AG04450 (cell line): ENCODE measurements at regions of chr12 and their contacts with region 1.

Region 1: GRCh38 chr12:12736759-12737676 is 19.9 kb downstream of the CDKN1B start:
- DNase-seq: no peak
- H3K4me3 ChIP-seq: peak overlapping the region; percentile 43
- H3K27ac ChIP-seq: peak overlapping the region; percentile 83
- H3K27me3 ChIP-seq: no peaks in the 10 kb centered on the region
- CTCF ChIP-seq: peak; percentile 62

Region 2: GRCh38 chr12:12376646-12377448 is 360.2 kb before region 1 on chr12:
- CTCF ChIA-PET with region 1: interaction called, 19 read pairs
- POLR2A ChIA-PET with region 1: no interaction called
- DNase-seq: peak; percentile 60
- H3K4me3 ChIP-seq: no peak overlapping the region
- H3K27ac ChIP-seq: no peak overlapping the region
- H3K27me3 ChIP-seq: no peaks in the 10 kb centered on the region
- CTCF ChIP-seq: peak; percentile 65

Region 3: DNA sequence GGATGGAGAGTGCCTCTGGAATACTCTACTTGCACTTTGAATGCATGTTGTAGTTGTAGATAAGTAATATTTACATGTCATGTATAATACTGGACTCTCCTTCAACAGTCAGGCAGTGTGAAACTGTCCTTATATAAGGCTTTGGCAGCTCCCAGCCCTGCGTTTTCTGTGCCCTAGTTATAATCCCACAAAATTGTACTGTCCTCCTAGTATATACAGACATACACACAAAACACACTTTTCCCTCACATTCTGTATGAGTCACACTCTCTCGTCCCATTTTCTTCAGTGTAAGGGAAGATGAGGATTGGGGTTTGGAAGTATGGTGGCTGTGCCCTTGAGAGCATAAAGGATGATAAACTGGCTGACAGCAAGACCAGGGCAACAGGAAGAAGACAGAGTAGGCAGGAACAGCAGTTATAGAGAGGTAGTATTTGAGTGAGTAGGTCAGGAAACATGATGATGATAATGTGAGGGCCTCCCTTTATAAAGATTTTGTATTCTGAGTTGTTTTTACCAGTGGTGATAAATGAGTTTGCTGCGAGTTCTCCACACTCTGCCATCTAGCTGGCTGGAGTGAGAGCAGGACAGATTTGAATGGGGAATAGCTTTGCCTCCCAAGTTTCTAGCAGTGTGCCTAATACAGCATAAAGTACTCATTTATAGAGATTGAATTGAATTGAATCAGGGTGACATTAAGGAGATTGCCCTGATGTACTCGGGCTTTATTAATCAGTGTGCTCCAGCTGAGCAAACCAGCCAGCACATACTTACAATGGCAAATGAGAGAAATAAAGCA is 120.3 kb before region 1 on chr12:
- CTCF ChIA-PET with region 1: no interaction called
- POLR2A ChIA-PET with region 1: no interaction called
- DNase-seq: no peak
- H3K4me3 ChIP-seq: no peak overlapping the region
- H3K27ac ChIP-seq: no peak overlapping the region
- H3K27me3 ChIP-seq: no peaks in the 10 kb centered on the region
- CTCF ChIP-seq: no peak

Region 4: GRCh38 chr12:12684375-12685106 is 52.5 kb before region 1 on chr12:
- CTCF ChIA-PET with region 1: no interaction called
- POLR2A ChIA-PET with region 1: no interaction called
- DNase-seq: no peak
- H3K4me3 ChIP-seq: no peak overlapping the region
- H3K27ac ChIP-seq: no peak overlapping the region
- H3K27me3 ChIP-seq: peaks cover 11% of the 10 kb centered on the region
- CTCF ChIP-seq: no peak

Region 5: DNA sequence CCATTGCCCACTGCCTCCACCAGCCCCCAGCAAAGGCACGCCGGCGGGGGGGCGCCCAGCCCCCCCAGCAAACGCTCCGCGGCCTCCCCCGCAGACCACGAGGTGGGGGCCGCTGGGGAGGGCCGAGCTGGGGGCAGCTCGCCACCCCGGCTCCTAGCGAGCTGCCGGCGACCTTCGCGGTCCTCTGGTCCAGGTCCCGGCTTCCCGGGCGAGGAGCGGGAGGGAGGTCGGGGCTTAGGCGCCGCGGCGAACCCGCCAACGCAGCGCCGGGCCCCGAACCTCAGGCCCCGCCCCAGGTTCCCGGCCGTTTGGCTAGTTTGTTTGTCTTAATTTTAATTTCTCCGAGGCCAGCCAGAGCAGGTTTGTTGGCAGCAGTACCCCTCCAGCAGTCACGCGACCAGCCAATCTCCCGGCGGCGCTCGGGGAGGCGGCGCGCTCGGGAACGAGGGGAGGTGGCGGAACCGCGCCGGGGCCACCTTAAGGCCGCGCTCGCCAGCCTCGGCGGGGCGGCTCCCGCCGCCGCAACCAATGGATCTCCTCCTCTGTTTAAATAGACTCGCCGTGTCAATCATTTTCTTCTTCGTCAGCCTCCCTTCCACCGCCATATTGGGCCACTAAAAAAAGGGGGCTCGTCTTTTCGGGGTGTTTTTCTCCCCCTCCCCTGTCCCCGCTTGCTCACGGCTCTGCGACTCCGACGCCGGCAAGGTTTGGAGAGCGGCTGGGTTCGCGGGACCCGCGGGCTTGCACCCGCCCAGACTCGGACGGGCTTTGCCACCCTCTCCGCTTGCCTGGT is 20.0 kb before region 1 on chr12 and contains the start of gene CDKN1B:
- CTCF ChIA-PET with region 1: interaction called, 18 read pairs
- POLR2A ChIA-PET with region 1: interaction called, 6 read pairs
- DNase-seq: peak; percentile 88
- H3K4me3 ChIP-seq: peak within 1 kb of the TSS; percentile 96
- H3K27ac ChIP-seq: peak within 1 kb of the TSS; percentile 95
- H3K27me3 ChIP-seq: no peaks in the 10 kb centered on the region
- CTCF ChIP-seq: no peak
- polyA plus RNA-seq, gene CDKN1B: 17.9 and 23.1 TPM in 2 replicates

Region 6: GRCh38 chr12:12757121-12757520 is 20.1 kb after region 1 on chr12:
- CTCF ChIA-PET with region 1: interaction called, 12 read pairs
- POLR2A ChIA-PET with region 1: no interaction called
- DNase-seq: no peak
- H3K4me3 ChIP-seq: no peak overlapping the region
- H3K27ac ChIP-seq: no peak overlapping the region
- H3K27me3 ChIP-seq: no peaks in the 10 kb centered on the region
- CTCF ChIP-seq: no peak

Region 7: DNA sequence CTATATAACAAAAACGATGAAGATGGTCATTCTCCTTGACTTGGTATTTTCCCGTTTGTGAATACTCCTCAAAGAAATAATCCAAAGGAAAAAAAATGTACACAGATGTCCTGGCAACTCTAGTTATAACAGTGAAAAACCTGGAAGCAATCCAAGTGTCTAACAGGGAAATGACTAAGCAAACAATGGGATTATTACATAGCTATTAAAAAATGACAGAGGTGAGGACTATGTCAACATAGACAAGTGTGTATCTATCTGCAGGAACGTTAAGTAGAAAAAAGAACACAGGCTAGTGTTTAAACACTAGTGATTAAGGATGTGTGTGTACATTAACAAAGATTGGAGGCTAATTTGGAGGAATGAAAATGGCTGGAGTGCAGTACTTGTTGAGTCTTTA is 42.5 kb after region 1 on chr12:
- CTCF ChIA-PET with region 1: interaction called, 12 read pairs
- POLR2A ChIA-PET with region 1: no interaction called
- DNase-seq: peak; percentile 88
- H3K4me3 ChIP-seq: no peak overlapping the region
- H3K27ac ChIP-seq: no peak overlapping the region
- H3K27me3 ChIP-seq: no peaks in the 10 kb centered on the region
- CTCF ChIP-seq: no peak

Region 8: DNA sequence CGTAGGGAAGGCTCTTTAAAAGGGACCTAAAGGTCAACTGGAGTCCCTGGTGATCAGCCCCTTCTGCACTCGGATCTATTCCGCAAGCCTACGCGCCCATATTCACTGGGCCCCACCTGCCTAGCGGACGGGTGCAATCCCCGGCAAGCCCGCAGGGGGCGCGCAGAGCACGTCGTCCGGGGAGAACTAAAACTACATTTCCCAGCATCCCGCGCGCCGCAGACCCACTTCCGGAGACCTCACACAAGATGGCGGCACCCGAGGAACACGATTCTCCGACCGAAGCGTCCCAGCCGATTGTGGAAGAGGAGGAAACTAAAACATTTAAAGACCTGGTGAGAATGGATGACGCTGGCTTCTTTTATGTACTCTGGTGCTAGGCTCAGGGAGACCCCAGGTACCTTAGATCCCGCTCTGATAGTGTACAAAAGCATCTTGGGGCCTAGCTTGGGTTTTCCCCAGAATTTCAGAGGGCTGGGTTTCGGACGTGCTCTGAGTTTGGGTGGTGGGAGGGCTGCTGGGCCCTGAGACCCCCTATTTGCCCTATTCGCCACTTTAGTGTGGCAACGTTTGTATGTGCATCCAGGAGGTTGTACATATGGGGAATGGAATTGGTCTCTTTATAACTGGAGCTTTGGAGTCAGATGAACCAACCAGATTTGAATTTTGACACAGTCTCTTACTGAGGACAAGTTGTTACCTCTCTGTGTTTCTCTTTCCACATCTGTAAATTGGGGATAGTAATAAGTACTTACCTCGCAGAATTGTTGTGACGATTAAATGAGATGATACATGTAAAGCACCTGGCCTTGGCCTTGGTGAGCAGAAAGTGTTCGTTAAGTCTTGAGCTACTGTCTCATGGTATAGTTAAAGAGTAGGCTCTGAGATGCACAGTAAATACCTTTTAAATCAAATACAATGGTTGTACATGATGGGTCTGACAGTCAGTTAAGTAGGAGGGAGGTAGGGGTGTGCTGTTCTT is 76.4 kb after region 1 on chr12 and contains the start of gene DDX47:
- CTCF ChIA-PET with region 1: interaction called, 15 read pairs
- POLR2A ChIA-PET with region 1: interaction called, 7 read pairs
- DNase-seq: peak; percentile 74
- H3K4me3 ChIP-seq: peak within 1 kb of the TSS; percentile 91
- H3K27ac ChIP-seq: peak within 1 kb of the TSS; percentile 49
- H3K27me3 ChIP-seq: no peaks in the 10 kb centered on the region
- CTCF ChIP-seq: peak; percentile 90
- polyA plus RNA-seq, gene DDX47: 91.3 and 113 TPM in 2 replicates

Region 9: DNA sequence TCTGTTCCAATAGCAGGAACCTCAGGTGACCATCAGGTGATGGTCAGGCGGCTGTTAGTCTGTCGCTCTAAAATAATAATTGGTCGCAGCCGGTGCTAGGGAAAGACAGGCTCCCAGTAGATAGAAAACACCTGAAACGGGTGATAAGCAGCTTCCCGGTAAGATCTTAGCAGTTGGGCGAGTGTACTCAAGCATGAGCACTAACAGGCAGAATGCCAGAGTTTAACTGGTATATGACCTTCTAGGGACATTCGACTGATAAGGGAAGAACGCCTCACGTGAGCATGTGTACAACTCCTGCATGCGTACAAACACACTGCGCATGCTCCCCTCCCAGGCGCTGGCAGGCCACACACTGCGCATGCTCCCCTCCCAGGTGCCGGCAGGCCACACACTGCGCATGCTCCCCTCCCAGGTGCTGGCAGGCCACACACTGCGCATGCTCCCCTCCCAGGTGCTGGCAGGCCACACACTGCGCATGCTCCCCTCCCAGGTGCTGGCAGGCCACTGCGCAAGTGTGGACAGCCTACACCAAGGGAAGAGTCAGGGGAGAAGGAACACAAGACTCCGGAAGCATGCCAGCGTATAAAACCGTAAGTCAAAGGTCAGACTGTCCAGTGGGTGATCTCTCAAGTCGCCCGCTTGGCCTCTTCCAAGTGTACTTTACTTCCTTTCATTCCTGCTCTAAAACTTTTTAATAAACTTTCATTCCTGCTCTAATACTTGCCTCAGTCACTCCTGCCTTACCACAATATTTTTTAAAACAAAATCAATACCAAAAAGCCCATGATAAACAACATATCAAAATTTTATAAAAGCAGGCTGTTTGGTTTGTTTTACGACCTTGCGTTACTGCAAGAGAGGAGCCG is 190.4 kb after region 1 on chr12:
- CTCF ChIA-PET with region 1: no interaction called
- POLR2A ChIA-PET with region 1: no interaction called
- DNase-seq: peak; percentile 47
- H3K4me3 ChIP-seq: peak overlapping the region; percentile 61
- H3K27ac ChIP-seq: peak overlapping the region; percentile 31
- H3K27me3 ChIP-seq: no peaks in the 10 kb centered on the region
- CTCF ChIP-seq: no peak